Caco-2 (cell line): ENCODE measurements at regions of chr2 and their contacts with region 1.

Region 1: DNA sequence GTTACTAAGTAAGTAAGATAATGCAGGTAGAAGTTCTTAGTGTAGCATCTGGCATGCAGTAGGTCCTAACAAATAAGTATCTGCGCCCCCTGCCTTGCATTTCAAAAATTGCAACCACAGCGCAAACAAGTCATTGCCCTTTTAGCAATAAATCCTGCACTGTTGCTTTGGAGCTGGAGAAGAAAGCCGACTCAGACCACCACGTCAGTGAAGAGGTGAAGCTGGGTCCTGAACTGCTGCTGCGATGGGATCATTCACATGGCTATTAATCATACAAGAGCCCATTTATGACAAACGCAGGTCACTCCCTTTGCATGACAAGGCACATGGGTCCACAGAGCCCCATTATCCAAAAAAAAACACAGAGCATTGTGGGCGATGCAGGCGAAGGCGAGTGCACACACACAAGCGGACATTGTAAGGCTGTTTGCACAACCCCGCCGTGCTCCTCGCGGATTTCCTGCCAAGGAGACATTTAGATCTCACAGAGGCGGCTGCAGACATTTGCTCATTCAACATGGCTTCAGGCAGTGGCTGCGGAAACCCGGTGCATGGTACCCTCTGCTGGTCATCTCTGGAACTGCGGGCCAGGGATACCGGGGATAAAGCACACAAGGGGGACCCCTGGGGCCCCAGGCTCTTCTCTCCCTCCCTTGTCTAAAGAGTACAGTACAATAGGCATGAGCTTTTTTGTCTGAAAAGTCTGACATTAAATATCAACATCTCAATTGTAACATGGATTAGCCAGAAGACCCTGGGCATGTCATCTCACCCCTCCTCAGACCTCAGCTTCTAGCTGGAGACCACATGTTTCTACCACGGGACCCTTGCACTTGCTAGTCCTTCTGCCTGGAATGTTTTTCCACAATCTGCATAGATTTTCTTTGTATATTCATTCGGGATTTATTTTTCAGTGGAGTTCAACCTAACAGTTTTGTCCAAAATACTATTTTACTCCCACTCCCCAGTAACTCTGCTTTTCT is 56.7 kb downstream of the CYRIA start:
- DNase-seq: peak; percentile 86 to 92
- H3K4me3 ChIP-seq: peak overlapping the region; percentile 53
- H3K4me3 Mint-ChIP-seq: peak overlapping the region; percentile 77
- H3K27ac Mint-ChIP-seq: peak overlapping the region; percentile 34
- H3K4me1 ChIP-seq: no peaks in the 10 kb centered on the region
- H3K4me1 Mint-ChIP-seq: peaks cover 7% of the 10 kb centered on the region
- H3K27me3 ChIP-seq: no peaks in the 10 kb centered on the region
- H3K27me3 Mint-ChIP-seq: peaks cover 7% of the 10 kb centered on the region
- CTCF ChIP-seq: peak; percentile 93 to 95

Region 2: GRCh38 chr2:16226921-16227664 is 381.9 kb before region 1 on chr2:
- CTCF ChIA-PET with region 1: no interaction called
- POLR2A ChIA-PET with region 1: no interaction called
- intact Hi-C with region 1: loop called (anchors 10 kb)
- DNase-seq: no peak
- H3K4me3 ChIP-seq: no peak overlapping the region
- H3K4me3 Mint-ChIP-seq: no peak overlapping the region
- H3K27ac Mint-ChIP-seq: no peak overlapping the region
- H3K4me1 ChIP-seq: peaks cover 16% of the 10 kb centered on the region; the same call in 1 of the 2 replicates
- H3K4me1 Mint-ChIP-seq: no peaks in the 10 kb centered on the region
- H3K27me3 ChIP-seq: no peaks in the 10 kb centered on the region
- H3K27me3 Mint-ChIP-seq: no peaks in the 10 kb centered on the region
- CTCF ChIP-seq: no peak

Region 3: DNA sequence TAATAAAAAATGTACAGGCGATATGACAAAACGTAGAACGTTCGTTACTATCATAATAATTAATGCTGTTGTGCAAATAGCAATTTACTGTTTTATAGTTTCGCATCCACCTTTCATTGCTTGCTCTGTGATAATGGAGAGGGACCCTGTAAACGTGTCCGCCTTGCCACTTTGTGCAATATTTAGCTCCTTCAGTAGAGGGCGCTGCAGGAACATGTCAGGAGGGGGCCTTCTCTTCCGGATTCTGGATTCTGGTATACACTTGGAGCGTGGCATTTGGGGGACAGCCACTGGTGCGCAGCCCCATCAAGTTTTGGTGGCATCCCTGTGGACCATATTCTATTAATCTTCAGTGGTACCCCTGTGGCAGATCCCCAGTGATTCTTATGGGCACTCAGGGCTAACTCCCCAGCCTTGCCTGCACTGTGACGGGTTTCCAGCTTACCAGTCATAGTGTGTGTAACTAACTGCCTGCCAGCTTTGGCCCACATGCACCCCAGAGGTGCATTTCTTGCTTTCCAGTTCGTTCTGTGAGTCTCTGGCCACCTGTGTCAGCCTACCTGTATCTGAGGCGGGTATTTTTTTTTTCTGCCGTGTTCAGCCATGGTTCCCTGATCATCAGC is 83.6 kb before region 1 on chr2:
- CTCF ChIA-PET with region 1: interaction called, 19 read pairs
- POLR2A ChIA-PET with region 1: no interaction called
- intact Hi-C with region 1: loop called (anchors 1 kb)
- DNase-seq: peak; percentile 62 to 68
- H3K4me3 ChIP-seq: no peak overlapping the region
- H3K4me3 Mint-ChIP-seq: no peak overlapping the region
- H3K27ac Mint-ChIP-seq: no peak overlapping the region
- H3K4me1 ChIP-seq: no peaks in the 10 kb centered on the region
- H3K4me1 Mint-ChIP-seq: no peaks in the 10 kb centered on the region
- H3K27me3 ChIP-seq: no peaks in the 10 kb centered on the region
- H3K27me3 Mint-ChIP-seq: peaks cover 13% of the 10 kb centered on the region
- CTCF ChIP-seq: peak; percentile 58 to 66

Region 4: GRCh38 chr2:16727256-16727655 is 118.3 kb after region 1 on chr2:
- CTCF ChIA-PET with region 1: no interaction called
- POLR2A ChIA-PET with region 1: no interaction called
- intact Hi-C with region 1: loop called (anchors 1 kb)
- DNase-seq: no peak
- H3K4me3 ChIP-seq: no peak overlapping the region
- H3K4me3 Mint-ChIP-seq: no peak overlapping the region
- H3K27ac Mint-ChIP-seq: no peak overlapping the region
- H3K4me1 ChIP-seq: no peaks in the 10 kb centered on the region
- H3K4me1 Mint-ChIP-seq: no peaks in the 10 kb centered on the region
- H3K27me3 ChIP-seq: no peaks in the 10 kb centered on the region; the same call in 1 of the 2 replicates
- H3K27me3 Mint-ChIP-seq: peaks cover 26% of the 10 kb centered on the region
- CTCF ChIP-seq: no peak

Region 5: DNA sequence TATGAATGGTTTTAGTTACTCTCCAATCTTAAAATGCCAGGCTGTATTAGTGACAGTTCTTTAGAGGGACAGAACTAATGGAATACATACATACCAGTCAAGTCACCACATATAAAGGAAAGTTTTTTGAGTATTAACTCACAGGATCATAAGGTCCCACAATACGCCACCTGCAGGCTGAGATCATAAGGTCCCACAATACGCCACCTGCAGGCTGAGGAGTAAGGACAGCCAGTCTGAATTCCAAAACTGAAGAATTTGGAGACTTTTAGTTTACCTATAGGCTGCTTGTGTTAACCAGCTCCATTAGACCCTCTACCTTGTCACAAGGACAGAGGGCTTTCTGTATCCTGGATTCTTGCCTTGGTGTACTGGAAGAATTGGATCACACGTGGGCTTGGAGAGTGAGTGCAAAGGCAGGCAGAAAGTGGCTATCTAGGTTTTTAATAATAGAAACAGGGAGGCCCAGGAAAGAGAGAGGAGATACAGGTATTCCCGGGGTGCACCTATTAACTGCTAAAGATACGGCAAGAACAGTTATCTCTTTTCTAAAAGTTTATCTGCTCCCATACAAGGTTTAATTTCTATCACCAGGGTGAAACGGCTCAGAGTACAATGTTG is 291.6 kb after region 1 on chr2:
- CTCF ChIA-PET with region 1: no interaction called
- POLR2A ChIA-PET with region 1: no interaction called
- intact Hi-C with region 1: loop called (anchors 10 kb)
- DNase-seq: peak; percentile 49 to 59
- H3K4me3 ChIP-seq: no peak overlapping the region
- H3K4me3 Mint-ChIP-seq: no peak overlapping the region
- H3K27ac Mint-ChIP-seq: no peak overlapping the region
- H3K4me1 ChIP-seq: no peaks in the 10 kb centered on the region
- H3K4me1 Mint-ChIP-seq: peaks cover 6% of the 10 kb centered on the region
- H3K27me3 ChIP-seq: no peaks in the 10 kb centered on the region
- H3K27me3 Mint-ChIP-seq: no peaks in the 10 kb centered on the region
- CTCF ChIP-seq: peak; percentile 87 to 98